G401 (cell line): ENCODE measurements at regions of chr4 and their contacts with region 1.

Region 1: GRCh38 chr4:186669159-186669731 is 54.4 kb downstream of the FAT1 start:
- DNase-seq: peak; percentile 81

Region 2: DNA sequence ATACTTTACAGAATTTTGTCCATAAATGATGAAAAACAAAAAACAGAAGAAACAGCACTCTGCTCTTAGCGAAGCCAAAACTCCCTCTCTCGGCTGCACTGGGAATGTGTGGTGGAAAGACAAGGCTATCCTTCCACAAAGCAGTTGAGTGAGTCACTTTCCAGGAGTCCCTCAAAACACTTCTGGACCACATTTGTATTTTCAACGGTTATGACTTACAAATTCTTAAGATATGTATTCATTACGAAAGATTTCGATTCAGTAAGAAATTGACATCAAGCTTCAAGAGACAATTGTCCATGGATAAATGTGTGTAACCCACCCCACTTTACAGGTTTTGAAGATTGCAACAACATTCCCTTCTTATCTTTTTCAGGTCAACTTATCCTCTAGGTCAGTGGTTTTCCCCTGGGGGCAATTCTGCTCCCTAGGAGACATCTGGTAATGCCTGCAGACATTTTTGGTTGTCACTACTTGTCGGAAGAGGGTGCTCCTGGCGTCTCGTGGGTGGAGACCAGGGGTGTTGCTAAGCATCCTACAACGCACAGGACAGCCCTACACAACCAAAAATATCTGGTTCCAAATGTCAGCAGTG is 47.2 kb before region 1 on chr4:
- in situ Hi-C with region 1: no loop called
- DNase-seq: no peak

Region 3: DNA sequence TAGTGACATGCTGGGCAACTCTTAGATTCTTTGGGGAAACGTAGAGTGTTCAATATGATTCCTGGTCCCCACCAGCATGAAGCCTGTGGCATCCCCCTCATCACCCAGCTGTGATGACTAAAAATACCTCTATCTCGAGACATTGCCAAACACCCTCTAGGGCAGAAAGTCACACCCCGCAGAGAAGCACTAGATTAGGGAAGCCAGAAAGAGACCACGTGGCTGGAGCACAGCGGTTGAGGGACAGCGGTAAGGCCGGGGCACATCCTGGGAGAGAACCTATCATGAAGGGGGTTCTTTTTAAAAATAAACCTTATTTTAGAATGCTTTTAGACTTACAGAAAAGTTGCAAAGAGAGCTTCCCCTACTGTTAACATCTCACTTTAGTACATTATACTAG is 43.4 kb after region 1 on chr4:
- in situ Hi-C with region 1: loop called (anchors 5 kb)
- DNase-seq: no peak